ENCODE measurements at regions of chr1 and their contacts with region 1.

Region 1: DNA sequence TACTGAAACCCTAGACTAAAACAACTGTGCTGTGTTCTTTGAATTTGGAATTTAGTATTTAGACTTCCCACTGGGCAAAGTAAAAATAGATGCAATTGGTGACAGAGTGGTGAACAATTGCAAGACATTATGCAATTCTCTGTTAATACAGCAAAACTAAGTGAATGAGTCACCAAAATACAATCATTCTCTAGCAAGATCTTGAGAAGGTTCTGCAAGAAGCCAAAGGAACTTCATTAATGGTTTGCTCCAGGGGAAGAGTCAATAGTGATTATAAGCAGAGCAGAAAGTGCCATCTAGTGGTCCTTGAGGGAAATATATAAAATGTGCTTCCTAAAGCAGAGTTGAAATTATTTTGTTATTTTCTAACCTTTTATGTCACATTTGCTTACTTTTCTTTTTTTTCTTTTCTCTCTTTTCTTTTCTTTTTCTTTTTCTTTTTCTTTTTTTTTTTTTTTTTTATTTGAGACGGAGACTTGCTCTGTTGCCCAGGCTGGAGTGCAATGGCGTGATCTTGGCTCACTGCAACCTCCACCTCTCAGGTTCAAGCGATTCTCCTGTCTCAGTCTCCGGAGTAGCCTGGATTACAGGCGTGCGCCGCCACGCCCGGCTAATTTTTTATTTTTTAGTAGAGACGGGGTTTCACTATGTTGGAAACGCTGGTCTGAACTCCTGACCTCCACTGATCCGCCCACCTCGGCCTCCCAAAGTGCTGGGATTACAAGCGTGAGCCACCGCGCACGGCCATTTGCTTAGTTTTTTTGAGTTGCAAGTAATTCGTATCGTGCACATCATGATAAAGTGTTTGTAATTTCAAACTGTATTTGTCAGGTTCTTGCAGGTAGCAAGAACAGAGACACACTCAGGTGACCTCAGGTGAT is 99.2 kb downstream of the CTH start:
- DNase-seq: peak; percentile 56 to 72 (median 62)
- ATAC-seq: peak; percentile 95
- H3K4me3 ChIP-seq: no peak overlapping the region
- H3K27ac ChIP-seq: no peak overlapping the region
- H3K4me1 ChIP-seq: no peaks in the 10 kb centered on the region; a peak in 1 of 5 replicates
- H3K27me3 ChIP-seq: no peaks in the 10 kb centered on the region
- CTCF ChIP-seq: peak; percentile 43 to 84 (median 54); a peak in 3 of 6 replicates
- EP300 ChIP-seq: no peak
- POLR2A ChIP-seq: no peak
- RAD21 ChIP-seq: peak; percentile 80 to 90

Region 2: GRCh38 chr1:69940816-69941215 is 569.4 kb before region 1 on chr1:
- CTCF ChIA-PET with region 1: no interaction called
- POLR2A ChIA-PET with region 1: no interaction called
- in situ Hi-C with region 1: no loop called
- intact Hi-C with region 1: no loop called
- DNase-seq: no peak
- ATAC-seq: no peak
- H3K4me3 ChIP-seq: no peak overlapping the region
- H3K27ac ChIP-seq: no peak overlapping the region
- H3K4me1 ChIP-seq: no peaks in the 10 kb centered on the region
- H3K27me3 ChIP-seq: no peaks in the 10 kb centered on the region
- CTCF ChIP-seq: no peak
- EP300 ChIP-seq: no peak
- POLR2A ChIP-seq: no peak
- RAD21 ChIP-seq: no peak

Region 3: GRCh38 chr1:70034403-70034802 is 475.8 kb before region 1 on chr1:
- CTCF ChIA-PET with region 1: no interaction called
- POLR2A ChIA-PET with region 1: no interaction called
- in situ Hi-C with region 1: no loop called
- intact Hi-C with region 1: loop called (anchors 2 kb)
- DNase-seq: peak; percentile 14 to 77 (median 32)
- ATAC-seq: peak; percentile 97
- H3K4me3 ChIP-seq: no peak overlapping the region
- H3K27ac ChIP-seq: no peak overlapping the region
- H3K4me1 ChIP-seq: peaks cover 0 to 3% of the 10 kb centered on the region in 2 experiments; a peak in 1 of 5 replicates
- H3K27me3 ChIP-seq: no peaks in the 10 kb centered on the region
- CTCF ChIP-seq: peak; percentile 67 to 86 (median 73)
- EP300 ChIP-seq: no peak
- POLR2A ChIP-seq: no peak
- RAD21 ChIP-seq: peak; percentile 98 to 99

Region 4: GRCh38 chr1:70134148-70134547 is 376.1 kb before region 1 on chr1:
- CTCF ChIA-PET with region 1: interaction called, 6 read pairs
- POLR2A ChIA-PET with region 1: no interaction called
- in situ Hi-C with region 1: loop called (anchors 5 kb)
- intact Hi-C with region 1: loop called (anchors 1 kb)
- DNase-seq: no peak
- ATAC-seq: no peak
- H3K4me3 ChIP-seq: no peak overlapping the region
- H3K27ac ChIP-seq: no peak overlapping the region
- H3K4me1 ChIP-seq: no peaks in the 10 kb centered on the region
- H3K27me3 ChIP-seq: no peaks in the 10 kb centered on the region
- CTCF ChIP-seq: no peak
- EP300 ChIP-seq: no peak
- POLR2A ChIP-seq: no peak
- RAD21 ChIP-seq: no peak

Region 5: GRCh38 chr1:70142075-70142474 is 368.2 kb before region 1 on chr1:
- CTCF ChIA-PET with region 1: no interaction called
- POLR2A ChIA-PET with region 1: no interaction called
- in situ Hi-C with region 1: loop called (anchors 5 kb)
- intact Hi-C with region 1: no loop called
- DNase-seq: peak in 3 of 4 experiments; percentile 9 to 12 (median 11)
- ATAC-seq: peak; percentile 74
- H3K4me3 ChIP-seq: no peak overlapping the region
- H3K27ac ChIP-seq: no peak overlapping the region
- H3K4me1 ChIP-seq: 0 out of 5 replicates have a peak, but pooled peaks cover 0 to 5% of the 10 kb centered on the region in 2 experiments
- H3K27me3 ChIP-seq: no peaks in the 10 kb centered on the region
- CTCF ChIP-seq: peak in 2 of 3 experiments; percentile 12 to 54; a peak in 3 of 6 replicates
- EP300 ChIP-seq: no peak
- POLR2A ChIP-seq: no peak
- RAD21 ChIP-seq: peak; percentile 66 to 74

Region 6: GRCh38 chr1:70256664-70257063 is 253.6 kb before region 1 on chr1:
- CTCF ChIA-PET with region 1: no interaction called
- POLR2A ChIA-PET with region 1: no interaction called
- in situ Hi-C with region 1: no loop called
- intact Hi-C with region 1: loop called (anchors 10 kb)
- DNase-seq: no peak
- ATAC-seq: peak; percentile 10
- H3K4me3 ChIP-seq: no peak overlapping the region
- H3K27ac ChIP-seq: no peak overlapping the region
- H3K4me1 ChIP-seq: no peaks in the 10 kb centered on the region
- H3K27me3 ChIP-seq: no peaks in the 10 kb centered on the region
- CTCF ChIP-seq: no peak
- EP300 ChIP-seq: no peak
- POLR2A ChIP-seq: no peak
- RAD21 ChIP-seq: no peak

Region 7: GRCh38 chr1:70487910-70488665 is 22.1 kb before region 1 on chr1:
- CTCF ChIA-PET with region 1: no interaction called
- POLR2A ChIA-PET with region 1: no interaction called
- in situ Hi-C with region 1: no loop called
- intact Hi-C with region 1: no loop called
- DNase-seq: peak; percentile 17 to 72 (median 37)
- ATAC-seq: peak; percentile 92
- H3K4me3 ChIP-seq: no peak overlapping the region
- H3K27ac ChIP-seq: no peak overlapping the region
- H3K4me1 ChIP-seq: no peaks in the 10 kb centered on the region
- H3K27me3 ChIP-seq: no peaks in the 10 kb centered on the region
- CTCF ChIP-seq: peak; percentile 77 to 86 (median 84)
- EP300 ChIP-seq: no peak
- POLR2A ChIP-seq: no peak
- RAD21 ChIP-seq: peak; percentile 92 to 97